ENCODE measurements at regions of chr6 and their contacts with region 1.

Region 1: GRCh38 chr6:108541838-108542759 is 18.6 kb upstream of the FOXO3 start:
- DNase-seq: no peak
- H3K4me3 ChIP-seq: no peak overlapping the region
- H3K27ac ChIP-seq: no peak overlapping the region
- H3K4me1 ChIP-seq: no peaks in the 10 kb centered on the region
- H3K27me3 ChIP-seq: no peaks in the 10 kb centered on the region
- CTCF ChIP-seq: peak; percentile 82 to 98 (median 97)
- POLR2A ChIP-seq: no peak

Region 2: DNA sequence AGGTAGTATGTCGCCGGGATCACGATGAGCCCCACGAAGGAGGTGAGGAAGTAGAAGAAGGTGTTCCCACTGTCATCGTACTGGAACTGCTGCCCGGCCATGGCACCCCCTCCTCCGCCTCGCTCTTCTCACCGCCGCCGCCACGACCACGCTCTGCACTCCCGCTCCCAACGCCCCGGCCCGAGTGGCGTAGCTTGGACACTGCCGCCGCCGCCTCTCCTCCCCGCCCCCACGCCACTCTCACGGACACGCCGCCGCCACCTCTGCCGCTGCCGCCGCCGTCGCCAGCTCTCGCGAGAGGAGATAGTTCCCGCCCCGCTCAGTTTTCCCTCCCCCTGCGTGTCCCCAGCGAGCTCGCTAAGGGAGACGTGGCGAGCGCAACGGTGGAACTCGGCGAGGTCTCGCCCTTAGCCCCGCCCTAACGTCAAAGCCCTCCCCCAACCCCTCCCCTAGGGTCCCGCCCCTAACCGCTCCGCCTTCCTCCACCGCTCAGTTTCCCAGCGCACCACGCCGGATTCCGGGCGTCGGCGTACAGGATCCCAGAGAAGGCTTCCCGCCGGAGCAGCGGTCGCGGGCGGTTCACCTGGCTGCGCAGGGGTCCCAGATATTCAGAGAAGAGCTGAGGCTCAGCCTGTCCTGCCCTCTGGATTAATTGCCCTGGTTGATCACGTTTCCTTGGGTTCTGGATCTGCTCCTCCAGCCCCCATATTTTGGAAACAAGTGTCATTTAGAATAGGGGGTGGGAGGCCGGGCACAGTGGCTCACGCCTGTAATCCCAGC is 584.0 kb before region 1 on chr6 and contains the start of gene SEC63:
- intact Hi-C with region 1: no loop called
- DNase-seq: peak; percentile 96 to 97
- H3K4me3 ChIP-seq: peak within 1 kb of the TSS; percentile 81 to 84
- H3K27ac ChIP-seq: peak within 1 kb of the TSS; percentile 84
- H3K4me1 ChIP-seq: peaks cover 29% of the 10 kb centered on the region
- H3K27me3 ChIP-seq: no peaks in the 10 kb centered on the region
- CTCF ChIP-seq: no peak
- POLR2A ChIP-seq: peak in 1 of 2 donors; percentile 77
- total RNA-seq, gene SEC63: 25.3 TPM

Region 3: DNA sequence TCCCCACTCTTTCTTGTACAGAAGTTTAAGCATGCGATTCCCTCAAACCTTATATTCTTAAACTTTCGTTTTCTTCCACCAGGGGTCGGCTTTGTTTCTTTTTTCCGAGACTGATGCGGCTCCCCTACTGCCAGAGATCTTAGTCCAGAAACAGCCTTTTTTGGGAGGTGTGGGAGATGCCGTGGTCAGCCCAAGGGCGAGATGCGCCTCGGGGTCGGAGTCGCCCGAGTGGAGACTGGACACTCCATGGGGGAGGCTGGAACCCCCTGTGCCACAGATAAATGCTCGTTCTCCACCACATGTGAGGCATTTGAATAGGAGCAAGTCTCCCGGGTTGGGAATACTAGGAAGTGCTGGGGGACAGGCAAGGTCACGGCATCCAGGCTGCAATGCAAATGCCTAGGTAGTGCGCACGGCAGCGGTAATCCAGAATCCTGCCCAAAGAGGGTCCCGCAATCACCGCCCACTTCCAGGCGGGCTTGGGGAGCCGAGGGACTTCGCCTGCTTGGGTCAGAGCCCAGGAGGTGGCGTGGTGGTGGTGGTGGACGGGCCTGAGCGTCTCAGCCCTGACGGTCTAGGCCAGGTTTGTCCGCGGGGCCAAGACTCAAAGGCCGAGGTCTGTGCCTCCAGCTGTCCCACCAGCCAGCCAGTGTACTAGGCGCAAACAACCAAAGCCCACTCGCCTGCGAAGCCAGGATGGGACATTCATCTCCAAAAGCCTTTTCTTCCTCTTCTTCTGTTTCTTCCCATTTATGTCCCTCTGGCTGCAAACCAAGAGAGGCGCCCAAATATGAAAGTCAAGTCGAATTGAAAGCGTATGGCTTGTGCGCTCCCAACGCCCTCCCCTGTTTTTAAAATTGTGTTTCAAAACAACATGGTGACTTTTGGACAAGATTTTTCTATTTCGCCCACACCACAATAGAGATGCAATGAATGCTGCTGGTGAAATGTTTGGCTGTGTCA is 428.3 kb before region 1 on chr6:
- intact Hi-C with region 1: no loop called
- DNase-seq: no peak
- H3K4me3 ChIP-seq: peak overlapping the region in 1 of 2 donors; percentile 23
- H3K27ac ChIP-seq: no peak overlapping the region
- H3K4me1 ChIP-seq: peaks cover 40% of the 10 kb centered on the region
- H3K27me3 ChIP-seq: peaks cover 10% of the 10 kb centered on the region
- CTCF ChIP-seq: peak in 2 of 3 experiments; percentile 51 to 63
- POLR2A ChIP-seq: no peak

Region 4: GRCh38 chr6:108835218-108835850 is 293.2 kb after region 1 on chr6:
- intact Hi-C with region 1: loop called (anchors 5 kb)
- DNase-seq: no peak
- H3K4me3 ChIP-seq: no peak overlapping the region
- H3K27ac ChIP-seq: peak overlapping the region; percentile 38
- H3K4me1 ChIP-seq: no peaks in the 10 kb centered on the region
- H3K27me3 ChIP-seq: no peaks in the 10 kb centered on the region
- CTCF ChIP-seq: peak; percentile 90 to 99 (median 92)
- POLR2A ChIP-seq: no peak

Region 5: DNA sequence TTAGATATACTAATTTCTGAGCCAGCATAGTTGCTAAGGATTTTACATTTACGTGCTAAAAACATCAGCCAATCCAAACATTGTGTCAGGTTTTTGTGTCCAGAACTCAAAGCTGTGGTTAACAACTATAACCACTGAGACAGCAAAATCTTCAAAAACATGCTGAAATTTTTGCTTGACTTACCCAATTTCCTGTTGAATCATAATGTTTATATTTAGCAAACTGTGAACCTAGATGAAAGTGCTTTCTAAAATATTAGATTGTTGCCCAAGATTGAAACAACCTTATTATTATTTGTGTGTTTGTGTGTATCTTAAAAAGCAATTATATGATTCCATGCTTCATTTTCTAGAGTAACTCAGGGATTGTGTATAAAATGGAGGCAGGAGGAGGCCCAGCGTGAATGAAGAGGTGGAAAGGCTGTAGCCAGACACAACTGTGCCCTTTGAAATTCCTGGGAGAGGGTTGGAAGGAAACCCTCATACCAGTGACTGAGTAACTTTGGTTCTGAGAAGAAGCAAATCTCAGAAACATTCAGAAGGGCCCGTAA is 354.1 kb after region 1 on chr6:
- intact Hi-C with region 1: loop called (anchors 5 kb)
- DNase-seq: no peak
- H3K4me3 ChIP-seq: no peak overlapping the region
- H3K27ac ChIP-seq: peak overlapping the region; percentile 45
- H3K4me1 ChIP-seq: peaks cover 14% of the 10 kb centered on the region
- H3K27me3 ChIP-seq: no peaks in the 10 kb centered on the region
- CTCF ChIP-seq: no peak
- POLR2A ChIP-seq: no peak

Region 6: GRCh38 chr6:109079981-109080380 is 537.9 kb after region 1 on chr6:
- intact Hi-C with region 1: loop called (anchors 5 kb)
- DNase-seq: no peak
- H3K4me3 ChIP-seq: no peak overlapping the region
- H3K27ac ChIP-seq: peak overlapping the region; percentile 62
- H3K4me1 ChIP-seq: peaks cover 53% of the 10 kb centered on the region
- H3K27me3 ChIP-seq: no peaks in the 10 kb centered on the region
- CTCF ChIP-seq: no peak
- POLR2A ChIP-seq: no peak

Measured in vagina (tissue), 2 donors.